Gastrocnemius medialis (tissue), 4 donors: ENCODE measurements at regions of chr22 and their contacts with region 1.

Region 1: DNA sequence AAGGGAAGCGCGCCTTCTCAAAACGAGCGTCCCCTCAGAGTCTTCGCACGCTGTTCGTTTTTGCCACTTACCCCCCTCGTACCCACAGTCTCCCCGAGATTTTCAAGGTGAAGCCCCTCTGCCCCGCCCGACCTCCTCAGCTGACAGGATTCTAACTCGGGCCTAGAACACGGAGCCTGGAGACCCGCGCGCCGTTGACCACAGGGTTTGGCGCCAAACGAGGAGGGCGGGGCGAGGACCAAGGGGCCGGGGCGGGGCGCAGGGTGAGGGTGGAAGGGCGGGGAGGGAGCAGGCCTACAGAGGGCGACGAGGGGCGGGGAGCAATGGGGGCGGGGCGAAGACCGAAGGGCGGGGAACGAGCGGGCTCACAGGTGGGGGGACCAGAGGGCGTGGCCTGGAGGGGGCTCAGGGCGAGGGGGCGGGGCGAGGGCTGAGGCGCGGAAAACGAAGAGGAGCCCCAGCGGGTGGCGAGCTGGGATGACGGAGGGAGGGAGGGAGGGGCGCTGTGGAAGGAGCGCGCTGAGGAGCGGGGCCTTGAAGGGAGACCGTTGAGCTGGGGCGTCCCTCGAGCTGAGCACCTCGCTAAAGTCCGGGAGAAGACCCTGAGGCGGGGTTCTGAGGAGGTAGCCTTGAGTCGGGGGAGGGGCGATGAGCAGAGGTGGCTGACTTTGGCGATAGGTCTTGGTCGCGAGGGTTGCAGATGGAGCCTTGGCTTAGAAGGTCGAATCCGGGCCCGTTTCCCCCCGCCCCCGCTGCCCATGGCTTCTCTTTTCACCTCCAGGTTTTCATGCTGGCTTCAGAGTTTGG is at the start of gene DMC1:
- DNase-seq: peak; percentile 86 to 89
- ATAC-seq: peak; percentile 84 to 90
- H3K4me3 ChIP-seq: peak within 1 kb of the TSS; percentile 68 to 79 (median 69)
- H3K27ac ChIP-seq: peak within 1 kb of the TSS; percentile 79 to 81 (median 80)
- H3K4me1 ChIP-seq: peaks cover 10 to 15% of the 10 kb centered on the region in 2 donors
- H3K27me3 ChIP-seq: no peaks in the 10 kb centered on the region
- CTCF ChIP-seq: no peak
- POLR2A ChIP-seq: peak; percentile 50 to 53
- total RNA-seq, gene DMC1: 0.18 TPM in 1 of 4 donors, not detected in the others

Region 2: DNA sequence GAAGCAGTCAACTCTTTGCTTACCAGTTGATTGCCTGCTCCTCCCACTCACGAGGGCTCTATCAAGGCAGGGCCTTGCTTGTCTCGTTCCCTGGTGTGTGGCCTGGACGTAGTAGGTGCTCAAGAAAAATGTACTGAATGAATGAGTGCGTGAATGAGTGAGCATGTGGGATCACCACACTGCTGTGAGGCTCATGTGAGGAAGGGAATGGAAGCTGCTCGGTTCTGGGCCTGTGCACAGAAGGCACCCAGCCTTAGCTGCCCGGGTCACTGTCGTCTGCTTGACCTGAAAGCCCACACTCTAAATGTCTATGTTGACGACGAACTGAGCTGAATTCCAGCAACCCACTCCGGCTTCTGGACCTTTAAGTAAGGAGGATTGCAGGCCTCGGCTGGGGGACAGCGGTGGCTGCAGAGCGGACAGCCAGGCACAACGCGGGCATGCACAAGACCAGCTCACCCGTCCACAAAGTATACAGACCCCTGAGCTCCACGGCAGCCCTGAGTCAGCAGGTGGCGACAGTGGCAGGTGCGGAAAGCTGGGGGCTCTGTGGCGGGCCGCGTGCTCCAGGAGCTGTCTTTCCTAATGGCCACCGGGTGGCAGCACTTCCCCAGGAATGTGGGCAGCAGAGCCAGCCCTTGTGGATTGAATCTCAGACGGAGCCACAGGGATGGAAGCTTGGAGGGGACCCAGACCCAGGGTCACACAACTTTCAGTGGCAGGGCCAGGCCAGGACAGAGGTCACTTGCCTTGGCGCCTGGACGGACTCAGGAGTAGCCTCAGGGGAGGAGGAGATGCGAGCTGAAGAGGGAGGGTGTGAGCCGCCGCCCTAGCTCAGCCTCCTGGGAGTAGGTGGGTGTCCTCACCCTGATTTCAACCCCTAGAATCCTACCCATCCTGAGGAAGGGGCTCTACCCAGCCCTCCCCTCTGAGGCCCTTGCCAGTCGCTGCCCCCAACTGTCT is 518.0 kb before region 1 on chr22:
- in situ Hi-C with region 1: loop called in 1 of 4 experiments (anchors 25 kb)
- intact Hi-C with region 1: loop called (anchors 2 kb)
- DNase-seq: peak; percentile 57 to 81
- ATAC-seq: peak; percentile 71 to 72
- H3K4me3 ChIP-seq: no peak overlapping the region
- H3K27ac ChIP-seq: no peak overlapping the region
- H3K4me1 ChIP-seq: peaks cover 5 to 7% of the 10 kb centered on the region in 2 donors
- H3K27me3 ChIP-seq: no peaks in the 10 kb centered on the region
- CTCF ChIP-seq: peak; percentile 88 to 96 (median 93)
- POLR2A ChIP-seq: no peak

Region 3: DNA sequence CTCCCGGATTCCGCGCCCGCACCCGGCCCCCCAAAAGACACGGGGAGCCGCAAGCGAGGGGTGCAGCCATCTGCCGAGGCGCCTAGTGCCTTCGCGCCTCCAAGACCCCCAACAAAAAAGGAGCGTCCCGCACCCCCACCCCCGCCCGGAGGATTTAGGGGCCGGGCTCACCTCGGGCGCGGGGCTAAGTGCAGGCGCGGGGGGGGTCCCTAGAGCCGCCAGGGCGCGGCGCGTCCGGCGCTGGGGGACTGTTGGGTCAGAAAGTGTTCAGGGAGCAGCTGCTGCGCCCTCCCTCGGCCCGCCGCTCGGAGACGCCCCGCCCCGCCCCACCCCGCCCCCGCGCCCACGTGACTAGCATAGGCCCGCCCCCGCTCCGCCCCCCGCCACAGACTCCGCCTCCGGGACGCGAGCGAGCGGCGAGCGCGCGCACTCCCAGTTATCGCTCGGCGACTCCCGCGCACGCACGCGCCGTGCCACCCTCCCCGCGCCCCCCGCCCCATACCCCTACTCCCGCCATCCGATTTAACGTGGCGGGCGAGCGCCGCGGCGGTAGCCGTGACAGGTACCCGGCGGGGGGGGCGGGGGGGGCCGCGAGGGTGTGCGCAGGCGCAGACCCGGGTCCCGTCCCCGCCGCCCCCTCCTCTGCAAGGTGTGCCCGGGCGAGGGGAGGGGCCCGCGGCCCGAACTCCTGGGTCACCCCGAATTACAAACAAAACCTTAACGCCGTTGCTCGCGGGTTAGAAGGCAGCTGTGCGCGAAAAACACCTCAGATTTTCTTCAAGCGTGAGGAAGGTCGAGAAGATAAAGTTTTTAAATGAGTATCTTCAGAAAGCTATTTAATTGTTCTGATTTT is 171.3 kb before region 1 on chr22:
- in situ Hi-C with region 1: no loop called
- intact Hi-C with region 1: loop called (anchors 5 kb)
- DNase-seq: peak; percentile 74 to 77
- ATAC-seq: peak; percentile 80 to 85
- H3K4me3 ChIP-seq: peak overlapping the region; percentile 74 to 99 (median 90)
- H3K27ac ChIP-seq: peak overlapping the region; percentile 88 to 99 (median 98)
- H3K4me1 ChIP-seq: peaks cover 10 to 18% of the 10 kb centered on the region in 2 donors
- H3K27me3 ChIP-seq: no peaks in the 10 kb centered on the region
- CTCF ChIP-seq: no peak
- POLR2A ChIP-seq: peak; percentile 88 to 89

Region 4: GRCh38 chr22:38412435-38413084 is 157.6 kb before region 1 on chr22:
- in situ Hi-C with region 1: no loop called
- intact Hi-C with region 1: loop called (anchors 1 kb)
- DNase-seq: no peak
- ATAC-seq: peak in 1 of 2 donors; percentile 51
- H3K4me3 ChIP-seq: peak overlapping the region; percentile 11 to 42 (median 32)
- H3K27ac ChIP-seq: no peak overlapping the region
- H3K4me1 ChIP-seq: peaks cover 10 to 11% of the 10 kb centered on the region in 2 donors
- H3K27me3 ChIP-seq: no peaks in the 10 kb centered on the region
- CTCF ChIP-seq: peak; percentile 59 to 83 (median 64)
- POLR2A ChIP-seq: no peak

Region 5: DNA sequence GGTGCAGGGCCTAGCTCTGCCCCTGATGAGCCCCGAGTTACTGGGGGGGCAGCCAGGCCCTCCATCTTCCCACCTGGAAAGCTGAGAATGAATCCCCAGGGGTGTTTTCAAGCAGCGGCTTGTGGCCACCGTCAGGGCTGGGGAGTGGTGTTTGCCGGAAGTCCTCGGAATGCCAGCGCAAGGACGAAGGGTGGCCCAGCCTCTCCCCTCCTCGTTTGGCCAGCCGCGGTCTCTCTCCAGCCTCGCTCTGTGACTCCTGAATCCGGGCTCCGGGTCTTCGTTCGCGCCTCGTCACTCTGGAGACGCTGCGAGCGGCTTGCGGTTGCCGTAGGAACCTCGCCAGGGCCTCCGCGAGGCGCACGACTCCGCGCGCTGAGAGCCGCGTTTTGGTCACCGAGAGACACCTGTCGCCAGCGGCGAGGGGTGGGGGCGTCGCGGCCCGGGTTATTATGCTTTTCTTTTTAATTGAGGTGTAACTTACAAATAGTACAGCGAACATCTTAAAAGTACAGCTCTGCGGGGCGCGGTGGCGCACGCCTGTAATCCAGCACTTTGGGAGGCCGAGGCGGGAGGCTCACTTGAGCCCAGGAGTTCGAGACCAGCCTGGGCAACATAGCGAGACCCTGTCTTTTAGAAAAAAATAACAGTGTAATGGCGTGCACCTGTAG is 108.6 kb before region 1 on chr22:
- in situ Hi-C with region 1: no loop called
- intact Hi-C with region 1: loop called (anchors 2 kb)
- DNase-seq: peak; percentile 33 to 42
- ATAC-seq: peak; percentile 76 to 78
- H3K4me3 ChIP-seq: peak overlapping the region; percentile 3 to 32 (median 20)
- H3K27ac ChIP-seq: no peak overlapping the region
- H3K4me1 ChIP-seq: peaks cover 4 to 5% of the 10 kb centered on the region in 2 donors
- H3K27me3 ChIP-seq: peaks cover 44 to 57% (median 48%) of the 10 kb centered on the region in 3 donors
- CTCF ChIP-seq: no peak
- POLR2A ChIP-seq: no peak

Region 6: GRCh38 chr22:38506118-38506962 is 63.8 kb before region 1 on chr22 and contains the start of gene DDX17:
- in situ Hi-C with region 1: no loop called
- intact Hi-C with region 1: loop called (anchors 1 kb)
- DNase-seq: peak; percentile 91 to 94
- ATAC-seq: peak; percentile 91 to 92
- H3K4me3 ChIP-seq: peak within 1 kb of the TSS; percentile 72 to 95 (median 85)
- H3K27ac ChIP-seq: peak within 1 kb of the TSS; percentile 94 to 100 (median 98)
- H3K4me1 ChIP-seq: peaks cover 34 to 36% of the 10 kb centered on the region in 2 donors
- H3K27me3 ChIP-seq: no peaks in the 10 kb centered on the region
- CTCF ChIP-seq: no peak
- POLR2A ChIP-seq: peak; percentile 53 to 84
- total RNA-seq, gene DDX17: 108 to 329 (median 206) TPM

Region 7: DNA sequence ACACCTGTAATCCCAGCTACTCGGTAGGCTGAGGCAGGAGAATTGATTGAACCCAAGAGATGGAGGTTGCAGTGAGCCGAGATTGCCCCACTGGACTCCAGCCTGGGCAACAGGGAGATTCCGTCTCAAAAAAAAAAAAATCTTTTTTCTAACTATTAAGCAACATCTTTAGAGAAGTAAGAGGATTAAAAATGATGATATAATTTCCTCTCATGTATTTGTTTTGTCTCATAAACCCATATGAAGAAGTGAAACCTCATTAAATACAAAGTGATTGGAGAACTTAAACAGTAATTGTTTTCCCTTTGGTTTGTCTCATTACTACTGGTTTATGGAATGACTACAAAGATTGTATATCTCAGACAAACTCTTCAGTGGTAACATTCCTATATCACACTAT is 20.7 kb before region 1 on chr22:
- in situ Hi-C with region 1: no loop called
- intact Hi-C with region 1: no loop called
- DNase-seq: no peak
- ATAC-seq: no peak
- H3K4me3 ChIP-seq: no peak overlapping the region
- H3K27ac ChIP-seq: no peak overlapping the region
- H3K4me1 ChIP-seq: no peaks in the 10 kb centered on the region
- H3K27me3 ChIP-seq: no peaks in the 10 kb centered on the region
- CTCF ChIP-seq: no peak
- POLR2A ChIP-seq: no peak

Region 8: GRCh38 chr22:38614332-38615063 is 44.3 kb after region 1 on chr22:
- in situ Hi-C with region 1: no loop called
- intact Hi-C with region 1: no loop called
- DNase-seq: no peak
- ATAC-seq: peak; percentile 64 to 65
- H3K4me3 ChIP-seq: no peak overlapping the region
- H3K27ac ChIP-seq: peak overlapping the region in 3 of 4 donors; percentile 37 to 55 (median 45)
- H3K4me1 ChIP-seq: peaks cover 10 to 11% of the 10 kb centered on the region in 2 donors
- H3K27me3 ChIP-seq: no peaks in the 10 kb centered on the region
- CTCF ChIP-seq: no peak
- POLR2A ChIP-seq: no peak

Region 9: GRCh38 chr22:38656256-38657044 is 86.3 kb after region 1 on chr22 and contains the starts of genes CBY1 and FAM227A:
- in situ Hi-C with region 1: no loop called
- intact Hi-C with region 1: loop called (anchors 1 kb)
- DNase-seq: peak; percentile 64 to 72
- ATAC-seq: peak; percentile 93 to 95
- H3K4me3 ChIP-seq: peak within 1 kb of the TSS; percentile 79 to 99 (median 92)
- H3K27ac ChIP-seq: peak within 1 kb of the TSS; percentile 87 to 98 (median 92)
- H3K4me1 ChIP-seq: peaks cover 7 to 18% of the 10 kb centered on the region in 2 donors
- H3K27me3 ChIP-seq: no peaks in the 10 kb centered on the region
- CTCF ChIP-seq: no peak
- POLR2A ChIP-seq: peak; percentile 72 to 76
- total RNA-seq, gene CBY1: 8.0 to 15.7 (median 12.6) TPM
- total RNA-seq, gene FAM227A: 0.02 TPM in 1 of 4 donors, not detected in the others